ENCODE measurements at regions of chr9 and their contacts with region 1.

Region 1: GRCh38 chr9:105712773-105713172 is 18.4 kb downstream of the TMEM38B start:
- DNase-seq: no peak
- H3K4me3 ChIP-seq: no peak overlapping the region
- H3K4me3 Mint-ChIP-seq: no peak overlapping the region
- H3K27ac ChIP-seq: no peak overlapping the region
- H3K27ac Mint-ChIP-seq: no peak overlapping the region
- H3K4me1 ChIP-seq: peaks cover 6% of the 10 kb centered on the region
- H3K4me1 Mint-ChIP-seq: peaks cover 0 to 10% (median 9%) of the 10 kb centered on the region in 3 donors
- H3K27me3 ChIP-seq: no peaks in the 10 kb centered on the region
- H3K27me3 Mint-ChIP-seq: no peaks in the 10 kb centered on the region

Region 2: GRCh38 chr9:105608721-105609598 is 103.8 kb before region 1 on chr9:
- CTCF ChIA-PET with region 1: interaction called, 14 read pairs
- POLR2A ChIA-PET with region 1: no interaction called
- DNase-seq: peak in 2 of 5 donors; percentile 12 to 16
- H3K4me3 ChIP-seq: no peak overlapping the region
- H3K4me3 Mint-ChIP-seq: no peak overlapping the region
- H3K27ac ChIP-seq: no peak overlapping the region
- H3K27ac Mint-ChIP-seq: peak overlapping the region in 1 of 8 donors; percentile 2
- H3K4me1 ChIP-seq: no peaks in the 10 kb centered on the region
- H3K4me1 Mint-ChIP-seq: no peaks in the 10 kb centered on the region
- H3K27me3 ChIP-seq: no peaks in the 10 kb centered on the region
- H3K27me3 Mint-ChIP-seq: no peaks in the 10 kb centered on the region